Dorsolateral prefrontal cortex (tissue), 120 donors: ENCODE measurements at regions of chr18 and their contacts with region 1.

Region 1: GRCh38 chr18:54119524-54120019 is 104.9 kb downstream of the MBD2 start:
- DNase-seq: peak in 2 of 10 donors; percentile 4 to 22
- H3K4me3 ChIP-seq: peak overlapping the region in 41 of 59 donors; percentile 4 to 56 (median 34)
- H3K27ac ChIP-seq: no peak overlapping the region
- H3K27me3 ChIP-seq: peaks cover 0 to 3% (median 0%) of the 10 kb centered on the region in 45 donors
- CTCF ChIP-seq: peak; percentile 69 to 92 (median 84)

Region 2: GRCh38 chr18:53567929-53568574 is 551.5 kb before region 1 on chr18:
- intact Hi-C with region 1: loop called in 1 of 2 experiments (anchors 10 kb)
- DNase-seq: no peak
- H3K4me3 ChIP-seq: no peak overlapping the region
- H3K27ac ChIP-seq: no peak overlapping the region
- H3K27me3 ChIP-seq: no peaks in the 10 kb centered on the region
- CTCF ChIP-seq: peak; percentile 36 to 76 (median 64)

Region 3: GRCh38 chr18:53698907-53699306 is 420.7 kb before region 1 on chr18:
- intact Hi-C with region 1: loop called in 1 of 2 experiments (anchors 2 kb)
- DNase-seq: peak in 8 of 10 donors; percentile 6 to 59 (median 43)
- H3K4me3 ChIP-seq: no peak overlapping the region
- H3K27ac ChIP-seq: no peak overlapping the region
- H3K27me3 ChIP-seq: no peaks in the 10 kb centered on the region
- CTCF ChIP-seq: peak; percentile 36 to 74 (median 61)

Region 4: GRCh38 chr18:54043484-54044251 is 75.9 kb before region 1 on chr18:
- intact Hi-C with region 1: no loop called
- DNase-seq: no peak
- H3K4me3 ChIP-seq: no peak overlapping the region
- H3K27ac ChIP-seq: no peak overlapping the region
- H3K27me3 ChIP-seq: no peaks in the 10 kb centered on the region
- CTCF ChIP-seq: no peak